ENCODE measurements at regions of chr10 and their contacts with region 1.

Region 1: DNA sequence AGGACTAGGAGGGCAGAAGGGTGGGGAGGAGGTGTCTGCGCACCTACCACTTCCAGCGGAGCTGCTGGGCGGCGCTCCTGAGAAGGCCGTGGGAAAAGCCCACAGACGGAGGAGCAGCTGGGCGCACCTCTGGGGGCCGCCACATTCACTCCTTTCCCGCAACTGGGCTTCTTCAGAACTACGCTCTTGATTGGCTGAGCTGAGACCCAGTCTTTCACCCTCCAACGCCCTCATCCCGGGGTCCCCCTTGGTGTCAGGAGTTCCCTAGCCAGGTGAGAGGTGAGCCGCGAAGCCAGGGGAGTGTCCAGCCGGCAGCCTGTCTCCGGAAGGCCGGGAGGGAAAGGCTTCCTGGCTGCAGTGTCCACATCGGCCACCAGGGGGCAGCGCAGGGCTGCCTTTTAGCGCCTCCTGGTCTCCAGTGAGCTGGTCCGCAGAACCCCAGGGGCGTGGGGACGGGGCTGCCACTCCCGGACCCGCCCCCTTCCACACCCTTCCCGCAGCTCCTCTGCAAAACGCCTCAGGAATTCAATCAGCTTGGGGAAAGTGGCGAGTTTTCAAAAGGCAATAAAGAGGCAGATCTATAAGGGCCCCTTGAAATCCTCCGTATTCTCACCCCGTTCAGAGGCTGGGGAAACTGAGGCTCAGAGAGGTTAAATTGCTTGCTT is 98.8 kb downstream of the CHST15 start:
- DNase-seq: peak; percentile 64
- H3K4me3 ChIP-seq: peak overlapping the region; percentile 10
- H3K27me3 ChIP-seq: peaks cover 9% of the 10 kb centered on the region
- CTCF ChIP-seq: peak; percentile 96

Region 2: DNA sequence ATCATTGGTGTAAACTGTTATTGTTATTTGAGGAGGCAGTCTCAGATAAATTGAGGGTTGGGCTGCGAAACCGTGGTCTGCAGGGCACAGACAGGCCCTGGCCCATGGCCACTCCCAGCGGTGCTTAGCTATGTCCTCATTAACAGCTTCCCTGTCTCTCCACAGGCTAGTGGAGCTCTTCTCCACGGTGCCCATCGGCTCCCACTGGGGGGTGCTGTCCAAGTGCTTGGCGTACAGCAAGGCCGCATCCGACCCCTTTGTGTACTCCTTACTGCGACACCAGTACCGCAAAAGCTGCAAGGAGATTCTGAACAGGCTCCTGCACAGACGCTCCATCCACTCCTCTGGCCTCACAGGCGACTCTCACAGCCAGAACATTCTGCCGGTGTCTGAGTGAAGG is 306.8 kb before region 1 on chr10:
- CTCF ChIA-PET with region 1: no interaction called
- POLR2A ChIA-PET with region 1: no interaction called
- DNase-seq: no peak
- H3K4me3 ChIP-seq: no peak overlapping the region
- H3K27me3 ChIP-seq: no peaks in the 10 kb centered on the region; the same call in 1 of the 2 replicates
- CTCF ChIP-seq: no peak

Region 3: GRCh38 chr10:123948030-123948823 is 46.3 kb before region 1 on chr10:
- CTCF ChIA-PET with region 1: no interaction called
- POLR2A ChIA-PET with region 1: no interaction called
- DNase-seq: no peak
- H3K4me3 ChIP-seq: no peak overlapping the region
- H3K27me3 ChIP-seq: no peaks in the 10 kb centered on the region; the same call in 1 of the 2 replicates
- CTCF ChIP-seq: no peak

Region 4: DNA sequence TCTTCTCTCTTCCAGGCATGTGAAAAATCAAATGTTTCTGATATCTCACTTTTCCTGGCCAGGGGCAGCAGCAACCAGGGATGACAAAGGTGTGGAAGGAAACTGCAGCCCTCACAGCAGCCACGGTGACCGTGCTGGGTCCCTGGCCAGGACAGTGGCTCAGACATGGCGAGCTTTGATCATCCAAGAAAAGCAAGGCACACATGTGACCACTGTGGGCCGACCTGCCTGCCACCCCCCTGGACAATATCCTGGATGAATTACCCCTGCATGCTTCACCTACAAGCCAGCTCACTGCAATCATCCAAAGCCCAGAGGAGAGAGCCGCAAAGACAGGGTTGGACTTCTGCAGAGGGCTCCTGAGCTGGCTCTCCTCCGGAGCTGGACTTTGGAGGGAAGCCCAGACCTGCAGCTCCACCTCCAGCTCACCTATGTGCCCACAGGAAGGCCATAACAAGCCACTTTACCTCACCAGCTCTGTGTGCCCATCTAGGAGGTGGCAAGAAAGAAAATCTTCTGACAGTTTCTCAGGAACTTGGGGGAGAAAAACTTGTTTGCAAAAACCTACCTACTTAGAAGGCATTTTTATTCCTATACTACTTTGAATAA is 96.2 kb after region 1 on chr10:
- CTCF ChIA-PET with region 1: interaction called, 10 read pairs
- POLR2A ChIA-PET with region 1: no interaction called
- DNase-seq: no peak
- H3K4me3 ChIP-seq: no peak overlapping the region
- H3K27me3 ChIP-seq: peaks cover 10% of the 10 kb centered on the region
- CTCF ChIP-seq: no peak

Region 5: GRCh38 chr10:124296121-124296812 is 301.7 kb after region 1 on chr10:
- CTCF ChIA-PET with region 1: interaction called, 16 read pairs
- POLR2A ChIA-PET with region 1: no interaction called
- DNase-seq: peak; percentile 61
- H3K4me3 ChIP-seq: no peak overlapping the region
- H3K27me3 ChIP-seq: no peaks in the 10 kb centered on the region
- CTCF ChIP-seq: peak; percentile 40

Region 6: DNA sequence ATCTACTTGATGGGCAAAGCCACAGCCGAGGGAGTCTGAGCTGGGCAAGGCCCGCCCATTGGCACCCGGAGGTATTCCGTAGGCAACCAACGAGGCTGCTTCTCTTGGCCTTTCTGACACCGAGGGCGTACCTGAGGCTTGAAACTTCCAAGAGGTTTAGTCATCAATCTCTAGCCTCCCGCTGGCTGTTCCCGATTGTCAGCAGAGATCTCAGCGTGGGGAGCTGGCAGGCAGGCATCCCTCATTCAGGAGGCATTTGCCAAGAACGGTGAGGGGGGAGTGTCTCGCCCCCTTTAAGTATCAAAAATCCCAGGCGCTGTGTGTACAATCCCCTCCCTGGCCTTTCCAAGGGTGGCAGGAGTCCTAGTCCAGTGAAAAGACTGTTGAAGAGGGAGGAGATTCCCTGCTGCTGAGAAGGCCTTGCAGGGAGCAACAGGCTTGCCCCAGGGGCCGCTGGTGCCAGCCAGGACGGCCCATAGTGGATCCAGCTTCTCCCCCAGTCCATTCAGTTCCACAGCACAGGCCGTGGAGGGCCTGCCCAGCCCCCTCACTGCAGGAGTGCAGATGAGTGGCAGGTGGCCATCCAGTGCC is 384.4 kb after region 1 on chr10:
- CTCF ChIA-PET with region 1: interaction called, 18 read pairs
- POLR2A ChIA-PET with region 1: no interaction called
- DNase-seq: no peak
- H3K4me3 ChIP-seq: no peak overlapping the region
- H3K27me3 ChIP-seq: peaks cover 3% of the 10 kb centered on the region; the same call in 1 of the 2 replicates
- CTCF ChIP-seq: no peak

Region 7: DNA sequence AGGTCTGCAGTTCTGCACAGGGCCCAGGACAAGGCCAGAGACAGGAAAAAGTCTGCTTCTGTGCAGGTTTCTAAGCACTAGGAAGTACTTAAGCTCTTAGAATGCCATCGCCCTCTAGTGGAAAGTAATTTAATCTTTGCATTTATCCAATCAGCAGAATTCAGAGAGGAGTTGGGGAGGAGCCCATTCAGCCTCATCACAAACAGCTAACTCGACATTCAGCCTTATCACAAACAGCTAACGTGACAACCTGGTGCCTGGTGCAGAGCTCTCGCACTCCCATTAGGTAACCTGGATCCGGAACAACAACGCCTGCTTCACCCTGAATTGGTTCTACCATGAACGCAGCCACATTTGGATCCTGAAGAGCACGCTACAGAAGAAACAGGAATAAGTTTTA is 409.0 kb after region 1 on chr10:
- CTCF ChIA-PET with region 1: interaction called, 316 read pairs
- POLR2A ChIA-PET with region 1: interaction called, 7 read pairs
- DNase-seq: no peak
- H3K4me3 ChIP-seq: no peak overlapping the region
- H3K27me3 ChIP-seq: no peaks in the 10 kb centered on the region
- CTCF ChIP-seq: peak; percentile 69

Measured in BJ (cell line).